Cardiac septum (tissue), 1 donor: ENCODE measurements at regions of chr16 and their contacts with region 1.

Region 1: GRCh38 chr16:83420206-83420760 is 387.5 kb upstream of the HSBP1 start:
- DNase-seq: no peak

Region 2: DNA sequence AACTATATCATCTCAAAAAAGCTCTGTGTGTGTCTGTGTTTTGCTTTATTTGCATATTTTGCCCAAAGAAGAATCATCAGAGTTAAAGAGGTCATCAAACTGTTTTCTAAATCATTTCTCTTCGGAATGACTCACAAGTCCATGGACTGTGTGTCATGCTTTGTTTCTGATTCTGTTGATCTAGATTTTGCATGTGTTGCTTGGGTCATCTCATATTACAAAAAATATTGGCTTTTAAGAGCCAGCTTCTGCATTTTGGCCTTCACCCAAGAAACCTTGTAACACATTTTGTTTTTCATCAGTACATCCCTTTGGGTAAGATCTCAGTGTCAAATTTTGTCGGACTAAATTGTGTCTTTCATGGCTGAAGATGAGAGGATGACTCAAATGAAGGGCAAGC is 83.7 kb before region 1 on chr16:
- intact Hi-C with region 1: no loop called
- DNase-seq: no peak

Region 3: DNA sequence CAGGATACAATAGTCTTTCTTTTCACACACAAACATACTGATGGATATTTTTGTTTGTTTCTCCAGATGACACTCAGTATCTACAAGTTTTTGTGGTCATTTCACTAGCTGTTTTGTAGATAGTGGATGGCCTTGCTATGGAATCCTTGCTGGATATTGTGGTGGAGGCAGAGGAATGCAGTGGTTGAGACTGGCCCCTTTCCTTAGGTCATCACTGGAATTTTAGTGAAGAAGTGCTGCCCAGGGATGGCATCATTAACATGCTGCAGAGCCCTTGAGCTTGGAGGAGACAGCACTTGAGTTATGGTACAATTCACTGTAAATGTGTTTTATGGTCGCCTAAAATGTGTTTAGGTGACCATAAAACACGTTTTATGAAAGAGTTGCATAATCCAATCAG is 68.4 kb before region 1 on chr16:
- intact Hi-C with region 1: no loop called
- DNase-seq: no peak

Region 4: DNA sequence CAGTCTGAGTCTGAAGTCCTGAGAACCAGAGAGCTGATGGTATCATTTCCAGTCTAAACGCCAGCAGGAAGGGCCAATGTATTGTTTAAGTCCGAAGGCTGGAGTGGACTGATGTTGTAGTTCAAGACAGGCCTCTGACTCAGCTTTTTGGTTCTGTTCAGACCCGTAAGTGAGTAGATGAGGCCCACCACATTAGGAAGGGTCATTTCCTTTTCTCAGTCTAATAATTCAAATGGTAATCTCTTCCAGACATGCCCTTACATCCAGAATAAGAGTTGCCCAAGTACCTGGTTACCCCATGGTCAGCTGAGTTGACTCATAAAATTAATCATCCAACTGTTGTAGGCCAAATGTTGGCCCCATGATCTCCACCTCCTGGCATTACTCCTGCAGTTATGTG is 55.1 kb before region 1 on chr16:
- intact Hi-C with region 1: loop called (anchors 10 kb)
- DNase-seq: no peak